ENCODE measurements at regions of chr2 and their contacts with region 1.

Region 1: GRCh38 chr2:49770919-49771318 is 616.6 kb upstream of the FSHR start:
- DNase-seq: peak; percentile 56 to 87
- H3K4me3 ChIP-seq: no peak overlapping the region
- H3K27ac ChIP-seq: no peak overlapping the region
- H3K4me1 ChIP-seq: no peaks in the 10 kb centered on the region; a peak in 2 of 7 replicates
- H3K27me3 ChIP-seq: no peaks in the 10 kb centered on the region
- CTCF ChIP-seq: peak; percentile 96 to 99 (median 97)
- EP300 ChIP-seq: no peak
- POLR2A ChIP-seq: no peak
- RAD21 ChIP-seq: peak; percentile 100

Region 2: DNA sequence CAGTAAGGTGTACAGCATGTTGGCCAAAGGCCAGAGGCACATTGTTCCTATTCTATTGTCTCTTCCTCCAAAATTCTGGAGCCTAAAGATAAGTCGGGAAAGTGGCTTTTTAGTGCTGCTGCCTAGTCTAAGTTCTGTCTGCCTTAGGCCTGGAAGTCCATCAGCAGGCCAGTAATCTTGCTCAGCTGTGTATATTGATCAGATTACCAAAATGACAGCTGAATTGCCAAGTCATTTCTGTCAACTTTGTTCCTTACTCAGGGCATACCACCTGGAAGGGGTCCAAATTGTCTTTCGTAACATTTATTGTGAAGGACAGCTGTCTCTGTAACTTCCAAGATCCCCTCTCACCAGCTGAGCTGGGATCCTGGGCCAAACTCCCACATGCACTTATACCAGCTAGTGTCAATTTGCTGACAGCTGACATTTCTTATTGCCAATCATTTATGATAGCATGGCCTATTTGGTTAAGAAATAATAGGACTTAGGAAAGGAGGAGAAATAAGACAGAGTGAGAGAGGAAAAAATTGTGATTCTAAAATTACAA is 499.8 kb before region 1 on chr2:
- CTCF ChIA-PET with region 1: no interaction called
- POLR2A ChIA-PET with region 1: no interaction called
- DNase-seq: no peak
- H3K4me3 ChIP-seq: no peak overlapping the region
- H3K27ac ChIP-seq: no peak overlapping the region
- H3K4me1 ChIP-seq: peaks cover 0 to 2% (median 0%) of the 10 kb centered on the region in 4 experiments; a peak in 1 of 7 replicates
- H3K27me3 ChIP-seq: no peaks in the 10 kb centered on the region
- CTCF ChIP-seq: no peak
- EP300 ChIP-seq: no peak
- POLR2A ChIP-seq: no peak
- RAD21 ChIP-seq: no peak

Region 3: GRCh38 chr2:49780949-49781348 is 10.0 kb after region 1 on chr2:
- CTCF ChIA-PET with region 1: interaction called, 19 read pairs
- POLR2A ChIA-PET with region 1: interaction called, 3 read pairs
- DNase-seq: no peak
- H3K4me3 ChIP-seq: no peak overlapping the region
- H3K27ac ChIP-seq: no peak overlapping the region
- H3K4me1 ChIP-seq: no peaks in the 10 kb centered on the region
- H3K27me3 ChIP-seq: no peaks in the 10 kb centered on the region
- CTCF ChIP-seq: no peak
- EP300 ChIP-seq: no peak
- POLR2A ChIP-seq: no peak
- RAD21 ChIP-seq: no peak

Region 4: GRCh38 chr2:49827366-49827765 is 56.4 kb after region 1 on chr2:
- CTCF ChIA-PET with region 1: interaction called, 10 read pairs
- POLR2A ChIA-PET with region 1: no interaction called
- DNase-seq: no peak
- H3K4me3 ChIP-seq: no peak overlapping the region
- H3K27ac ChIP-seq: no peak overlapping the region
- H3K4me1 ChIP-seq: peaks cover 0 to 6% (median 2%) of the 10 kb centered on the region in 4 experiments; a peak in 3 of 7 replicates
- H3K27me3 ChIP-seq: no peaks in the 10 kb centered on the region
- CTCF ChIP-seq: no peak
- EP300 ChIP-seq: no peak
- POLR2A ChIP-seq: no peak
- RAD21 ChIP-seq: no peak

Region 5: DNA sequence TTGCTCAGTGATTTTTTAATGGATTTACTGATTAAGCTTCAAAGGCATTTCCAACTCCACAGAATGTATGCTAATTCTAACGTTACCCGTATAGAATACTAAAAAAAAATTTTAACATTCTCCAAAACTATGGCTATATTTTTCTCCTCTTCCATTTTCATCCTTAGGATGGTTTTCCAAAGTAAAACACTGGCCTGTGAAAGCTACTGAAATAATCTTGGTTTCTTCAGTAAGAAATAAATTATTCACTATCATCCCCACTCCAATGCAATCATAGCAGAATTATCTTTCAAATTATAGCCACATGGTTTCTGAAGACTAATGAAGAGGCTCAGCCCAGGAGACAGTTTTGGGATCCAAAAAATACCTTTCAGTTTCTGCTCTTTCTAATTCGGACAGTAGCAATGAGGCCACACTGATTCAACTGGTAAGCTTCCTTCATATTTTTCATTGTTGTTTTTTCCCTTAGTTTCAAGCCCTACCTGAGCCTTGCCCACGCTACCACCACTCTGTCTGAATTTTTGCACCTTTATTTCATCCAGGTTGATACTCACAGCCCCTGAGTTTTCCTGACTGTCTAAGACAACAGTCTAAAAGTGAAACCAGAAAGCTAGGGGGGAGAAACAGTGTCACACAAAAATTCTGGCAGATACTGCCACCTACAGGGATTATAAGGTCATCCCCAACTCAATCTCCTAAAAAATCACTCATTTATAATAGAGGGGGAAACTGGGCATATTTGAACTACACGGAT is 373.1 kb after region 1 on chr2:
- CTCF ChIA-PET with region 1: interaction called, 67 read pairs
- POLR2A ChIA-PET with region 1: no interaction called
- DNase-seq: no peak
- H3K4me3 ChIP-seq: no peak overlapping the region
- H3K27ac ChIP-seq: no peak overlapping the region
- H3K4me1 ChIP-seq: peaks cover 0 to 3% (median 1%) of the 10 kb centered on the region in 4 experiments; a peak in 2 of 7 replicates
- H3K27me3 ChIP-seq: no peaks in the 10 kb centered on the region
- CTCF ChIP-seq: peak in 2 of 3 experiments; percentile 46 to 51; a peak in 2 of 4 replicates
- EP300 ChIP-seq: no peak
- POLR2A ChIP-seq: no peak
- RAD21 ChIP-seq: peak; percentile 79 to 86

Region 6: GRCh38 chr2:50401772-50402653 is 631.1 kb after region 1 on chr2:
- CTCF ChIA-PET with region 1: interaction called, 51 read pairs
- POLR2A ChIA-PET with region 1: no interaction called
- DNase-seq: peak; percentile 29 to 84
- H3K4me3 ChIP-seq: no peak overlapping the region
- H3K27ac ChIP-seq: no peak overlapping the region
- H3K4me1 ChIP-seq: peaks cover 0 to 5% (median 3%) of the 10 kb centered on the region in 4 experiments; a peak in 3 of 7 replicates
- H3K27me3 ChIP-seq: no peaks in the 10 kb centered on the region
- CTCF ChIP-seq: peak; percentile 13 to 93 (median 77)
- EP300 ChIP-seq: no peak
- POLR2A ChIP-seq: no peak
- RAD21 ChIP-seq: peak; percentile 97 to 98

Measured in H1 (cell line).